Heart left ventricle (tissue), 16 donors: ENCODE measurements at regions of chr19 and their contacts with region 1.

Region 1: DNA sequence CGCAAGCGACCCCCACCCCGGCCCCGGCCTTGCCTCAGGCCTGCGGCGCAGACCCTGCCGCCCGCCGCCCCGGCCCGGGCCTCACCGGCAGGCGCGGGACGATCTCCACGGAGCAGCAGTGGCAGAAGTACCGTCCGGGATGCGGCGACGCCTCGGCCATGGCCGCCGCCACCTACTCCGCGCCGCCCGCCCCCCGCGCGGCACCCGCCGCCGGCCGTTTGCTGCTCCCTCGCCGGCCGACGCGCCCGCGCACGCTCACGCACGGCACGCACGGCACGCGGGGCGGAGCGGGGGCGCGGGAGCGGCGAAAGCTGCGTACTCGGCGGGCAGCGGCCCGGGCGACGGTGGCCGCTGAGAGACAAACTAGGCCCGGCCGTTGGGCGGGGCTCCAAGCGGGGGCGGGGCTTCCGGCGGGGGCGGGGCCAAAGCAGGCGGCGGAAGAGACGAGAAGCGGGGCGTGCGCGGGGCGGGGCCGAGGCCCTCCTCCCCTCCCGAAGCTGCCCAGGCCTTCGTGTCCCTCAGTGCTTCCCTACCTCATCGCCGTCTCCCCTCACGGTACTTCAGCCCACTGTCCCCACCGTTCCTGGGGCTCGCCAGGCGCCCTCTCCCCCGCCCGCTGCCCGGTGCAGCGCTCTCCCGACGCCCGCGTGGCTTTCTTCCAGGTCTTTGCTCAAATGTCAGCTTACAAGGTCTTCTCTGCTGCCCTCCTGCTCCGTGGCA is at the start of gene RNF126:
- DNase-seq: peak; percentile 92 to 97 (median 94)
- ATAC-seq: peak; percentile 62 to 84 (median 80)
- H3K4me3 ChIP-seq: peak within 1 kb of the TSS; percentile 76 to 100 (median 96)
- H3K27ac ChIP-seq: peak within 1 kb of the TSS; percentile 43 to 97 (median 92)
- H3K4me1 ChIP-seq: peaks cover 22 to 67% (median 55%) of the 10 kb centered on the region in 12 donors
- H3K27me3 ChIP-seq: no peaks in the 10 kb centered on the region
- CTCF ChIP-seq: no peak
- POLR2A ChIP-seq: peak in 1 of 2 donors; percentile 24
- total RNA-seq, gene RNF126: 21.6 to 105 (median 29.4) TPM

Region 2: DNA sequence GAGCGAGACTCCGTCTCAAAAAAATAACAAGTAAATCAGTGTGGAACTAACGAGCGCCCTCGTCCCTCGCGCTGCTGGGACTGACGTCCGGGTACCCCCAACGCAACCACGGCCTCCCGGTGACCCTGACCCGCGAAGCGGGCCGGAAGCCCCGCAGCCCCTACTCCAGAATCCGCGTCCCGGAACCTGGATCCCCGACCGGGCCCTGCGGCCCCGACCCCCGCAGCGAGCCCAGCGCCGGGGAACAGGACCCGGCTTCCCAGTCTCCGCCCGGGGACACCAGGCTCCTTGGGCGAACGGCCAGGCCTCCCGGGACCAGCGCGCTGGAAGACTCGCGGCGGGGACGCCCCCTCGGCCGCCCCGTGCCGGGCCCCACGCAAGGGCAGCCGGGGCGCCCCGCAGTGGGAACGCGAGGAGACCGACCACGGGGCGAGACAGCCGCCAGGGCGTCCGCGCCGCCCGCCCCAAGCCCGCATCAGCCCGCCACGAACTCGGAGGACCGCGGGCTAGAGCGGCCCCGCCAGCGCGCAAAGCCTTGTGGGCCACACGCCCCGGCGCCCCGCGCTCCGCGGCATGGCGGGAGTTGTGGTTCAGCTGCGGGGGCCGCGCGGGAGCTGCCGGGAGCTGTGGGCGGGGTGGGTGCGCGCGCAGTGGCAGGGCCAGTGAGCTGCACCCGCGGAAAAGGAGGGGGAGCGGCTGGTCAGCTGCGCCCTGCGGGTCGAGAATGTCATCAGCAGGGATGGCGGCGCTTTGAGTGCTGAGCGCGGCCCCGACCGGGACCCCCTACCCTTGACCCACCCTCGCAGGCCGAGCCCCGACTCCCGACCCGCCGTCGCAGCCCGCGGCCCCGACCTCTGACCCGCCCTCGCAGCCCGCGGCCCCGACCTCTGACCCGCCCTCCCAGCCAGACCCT is 174.4 kb before region 1 on chr19:
- intact Hi-C with region 1: no loop called
- DNase-seq: peak; percentile 98 to 99 (median 98)
- ATAC-seq: peak; percentile 95 to 97 (median 96)
- H3K4me3 ChIP-seq: peak overlapping the region; percentile 74 to 99 (median 93)
- H3K27ac ChIP-seq: peak overlapping the region; percentile 75 to 97 (median 94)
- H3K4me1 ChIP-seq: peaks cover 0 to 18% (median 4%) of the 10 kb centered on the region in 12 donors
- H3K27me3 ChIP-seq: peaks cover 0 to 32% (median 8%) of the 10 kb centered on the region in 9 donors
- CTCF ChIP-seq: peak in 2 of 12 donors; percentile 15 to 26
- POLR2A ChIP-seq: peak in 1 of 2 donors; percentile 91

Region 3: DNA sequence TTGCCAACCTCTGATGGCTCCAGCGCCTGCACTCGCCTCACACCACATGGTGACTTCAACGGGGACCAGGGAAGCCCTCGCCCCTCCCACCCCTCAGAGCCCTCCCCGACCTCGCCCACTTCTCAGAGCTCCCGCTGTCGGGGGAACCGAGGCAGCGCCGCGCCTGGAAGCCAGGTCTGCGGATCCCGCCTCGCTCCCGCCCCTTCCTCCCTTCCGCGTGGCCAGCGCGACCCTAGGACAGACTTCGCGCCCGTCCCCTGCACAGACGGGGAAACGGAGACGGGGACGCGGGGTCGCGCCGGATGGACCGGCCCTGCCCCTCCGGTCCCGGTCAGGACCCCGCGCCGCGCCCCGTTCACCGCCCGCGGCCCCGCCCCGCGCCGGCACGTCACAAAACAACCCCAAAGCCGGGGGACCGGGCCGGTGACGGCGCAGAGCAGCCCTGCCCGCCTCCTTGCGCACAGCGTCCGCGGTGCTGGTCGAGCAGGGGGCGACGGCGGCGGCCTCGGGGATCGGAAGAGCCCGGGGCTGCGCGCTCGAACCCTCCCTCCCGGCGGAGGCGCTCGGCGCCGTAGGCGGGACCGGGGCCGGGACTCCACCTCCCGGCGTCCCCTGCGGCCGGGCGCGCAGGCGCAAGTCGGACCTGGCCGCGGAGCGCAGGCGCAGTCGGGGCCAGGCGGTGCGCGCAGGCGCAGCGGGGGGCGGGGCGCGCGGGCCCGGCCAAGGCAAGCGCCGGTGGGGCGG is 131.9 kb before region 1 on chr19:
- intact Hi-C with region 1: no loop called
- DNase-seq: peak; percentile 85 to 94 (median 88)
- ATAC-seq: peak; percentile 27 to 80 (median 68)
- H3K4me3 ChIP-seq: peak overlapping the region; percentile 74 to 100 (median 92)
- H3K27ac ChIP-seq: peak overlapping the region; percentile 93 to 100 (median 98)
- H3K4me1 ChIP-seq: peaks cover 16 to 35% (median 28%) of the 10 kb centered on the region in 12 donors
- H3K27me3 ChIP-seq: peaks cover 0 to 2% (median 0%) of the 10 kb centered on the region in 9 donors
- CTCF ChIP-seq: peak in 3 of 12 donors; percentile 16 to 25 (median 19)
- POLR2A ChIP-seq: peak in 1 of 2 donors; percentile 72

Region 4: GRCh38 chr19:588093-588740 is 74.9 kb before region 1 on chr19:
- intact Hi-C with region 1: loop called in 1 of 10 experiments (anchors 10 kb)
- DNase-seq: peak; percentile 73 to 87 (median 84)
- ATAC-seq: peak; percentile 14 to 62 (median 31)
- H3K4me3 ChIP-seq: peak overlapping the region in 1 of 12 donors; percentile 16
- H3K27ac ChIP-seq: peak overlapping the region in 8 of 12 donors; percentile 10 to 69 (median 32)
- H3K4me1 ChIP-seq: peaks cover 0 to 42% (median 21%) of the 10 kb centered on the region in 12 donors
- H3K27me3 ChIP-seq: peaks cover 15 to 51% (median 29%) of the 10 kb centered on the region in 9 donors
- CTCF ChIP-seq: peak; percentile 32 to 61 (median 43)
- POLR2A ChIP-seq: no peak

Region 5: DNA sequence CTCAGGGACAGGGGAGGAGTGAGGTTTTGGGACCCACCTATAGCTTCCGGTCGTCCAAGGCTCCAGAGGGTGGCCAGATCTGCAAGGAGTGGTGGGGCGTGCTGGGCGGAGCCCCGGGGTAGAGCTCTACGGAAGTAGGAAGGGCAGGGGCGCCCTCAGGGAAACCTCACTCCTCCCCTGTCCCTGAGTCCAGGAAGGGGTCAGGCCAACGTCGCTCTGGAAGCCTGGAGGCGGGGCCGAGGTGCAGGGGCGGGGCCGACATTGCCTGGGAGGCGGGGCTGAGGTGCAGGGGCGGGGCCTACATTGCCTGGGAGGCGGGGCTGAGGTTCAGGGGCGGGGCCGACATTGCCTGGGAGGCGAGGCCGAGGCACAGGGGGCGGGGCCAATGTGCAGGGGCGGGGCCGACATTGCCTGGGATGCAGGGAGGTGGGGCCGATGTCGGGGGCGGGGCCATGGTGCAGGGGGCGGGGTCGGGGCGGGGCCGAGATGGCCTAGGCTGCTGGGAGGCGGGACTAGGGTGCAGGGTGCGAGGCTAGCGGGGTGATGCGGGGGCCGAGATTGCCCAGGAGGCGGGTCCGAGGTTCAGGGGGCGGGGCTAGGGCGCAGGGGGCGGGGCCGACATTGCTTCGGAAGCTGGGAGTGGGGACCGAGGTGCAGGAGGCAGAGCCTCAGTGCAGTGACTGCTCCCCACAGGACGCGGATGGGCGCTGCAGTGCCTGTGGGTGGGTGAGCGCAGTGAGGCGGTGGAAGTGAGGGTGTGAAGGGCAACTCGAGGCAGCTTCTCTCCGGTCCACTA is 40.7 kb after region 1 on chr19:
- intact Hi-C with region 1: loop called in 1 of 10 experiments (anchors 1 kb)
- DNase-seq: peak; percentile 74 to 93 (median 84)
- ATAC-seq: peak; percentile 75 to 92 (median 86)
- H3K4me3 ChIP-seq: peak overlapping the region in 8 of 12 donors; percentile 15 to 50 (median 34)
- H3K27ac ChIP-seq: peak overlapping the region in 6 of 12 donors; percentile 17 to 45 (median 36)
- H3K4me1 ChIP-seq: peaks cover 0 to 27% (median 9%) of the 10 kb centered on the region in 12 donors
- H3K27me3 ChIP-seq: peaks cover 0 to 16% (median 0%) of the 10 kb centered on the region in 9 donors
- CTCF ChIP-seq: no peak
- POLR2A ChIP-seq: peak in 1 of 2 donors; percentile 20

Region 6: GRCh38 chr19:796692-797527 is 133.8 kb after region 1 on chr19 and contains the start of gene PTBP1:
- intact Hi-C with region 1: loop called in 1 of 10 experiments (anchors 1 kb)
- DNase-seq: peak; percentile 100
- ATAC-seq: peak; percentile 88 to 94 (median 92)
- H3K4me3 ChIP-seq: peak within 1 kb of the TSS; percentile 67 to 100 (median 90)
- H3K27ac ChIP-seq: peak within 1 kb of the TSS; percentile 93 to 100 (median 99)
- H3K4me1 ChIP-seq: peaks cover 18 to 56% (median 48%) of the 10 kb centered on the region in 12 donors
- H3K27me3 ChIP-seq: no peaks in the 10 kb centered on the region
- CTCF ChIP-seq: peak in 6 of 12 donors; percentile 16 to 58 (median 32)
- POLR2A ChIP-seq: peak in 1 of 2 donors; percentile 61
- total RNA-seq, gene PTBP1: 47.6 to 144 (median 55.6) TPM